ENCODE measurements at regions of chr21 and their contacts with region 1.

Region 1: GRCh38 chr21:37644636-37645035 is 271.6 kb downstream of the KCNJ6 start:
- DNase-seq: no peak
- H3K4me3 ChIP-seq: no peak overlapping the region
- H3K27ac ChIP-seq: no peak overlapping the region
- H3K4me1 ChIP-seq: peaks cover 0 to 17% (median 11%) of the 10 kb centered on the region in 4 donors
- H3K27me3 ChIP-seq: no peaks in the 10 kb centered on the region
- CTCF ChIP-seq: no peak
- EP300 ChIP-seq: no peak
- POLR2A ChIP-seq: no peak

Region 2: GRCh38 chr21:37412603-37413360 is 231.9 kb before region 1 on chr21:
- intact Hi-C with region 1: no loop called
- DNase-seq: no peak
- H3K4me3 ChIP-seq: no peak overlapping the region
- H3K27ac ChIP-seq: peak overlapping the region in 1 of 4 donors; percentile 15
- H3K4me1 ChIP-seq: peaks cover 0 to 96% (median 73%) of the 10 kb centered on the region in 4 donors
- H3K27me3 ChIP-seq: no peaks in the 10 kb centered on the region
- CTCF ChIP-seq: no peak
- EP300 ChIP-seq: no peak
- POLR2A ChIP-seq: no peak

Region 3: GRCh38 chr21:37563641-37564340 is 80.8 kb before region 1 on chr21:
- intact Hi-C with region 1: loop called (anchors 5 kb)
- DNase-seq: peak; percentile 96
- H3K4me3 ChIP-seq: peak overlapping the region; percentile 63 to 85 (median 74)
- H3K27ac ChIP-seq: peak overlapping the region; percentile 91 to 93 (median 92)
- H3K4me1 ChIP-seq: peaks cover 0 to 26% (median 17%) of the 10 kb centered on the region in 4 donors
- H3K27me3 ChIP-seq: no peaks in the 10 kb centered on the region
- CTCF ChIP-seq: peak in 3 of 4 experiments; percentile 8 to 43 (median 37)
- EP300 ChIP-seq: no peak
- POLR2A ChIP-seq: peak; percentile 18 to 21

Measured in sigmoid colon (tissue), 7 donors.